ENCODE measurements at regions of chr16 and their contacts with region 1.

Region 1: GRCh38 chr16:30844671-30845449 is 49.0 kb downstream of the BCL7C start:
- DNase-seq: peak; percentile 31
- ATAC-seq: peak; percentile 93
- H3K4me3 Mint-ChIP-seq: peak overlapping the region; percentile 65
- H3K27ac Mint-ChIP-seq: peak overlapping the region; percentile 77
- H3K4me1 Mint-ChIP-seq: peaks cover 11% of the 10 kb centered on the region
- H3K27me3 Mint-ChIP-seq: no peaks in the 10 kb centered on the region
- CTCF ChIP-seq: peak; percentile 71

Region 2: GRCh38 chr16:30740364-30741251 is 104.3 kb before region 1 on chr16:
- CTCF ChIA-PET with region 1: no interaction called
- POLR2A ChIA-PET with region 1: no interaction called
- intact Hi-C with region 1: no loop called
- DNase-seq: no peak
- ATAC-seq: no peak
- H3K4me3 Mint-ChIP-seq: no peak overlapping the region
- H3K27ac Mint-ChIP-seq: peak overlapping the region; percentile 15
- H3K4me1 Mint-ChIP-seq: no peaks in the 10 kb centered on the region
- H3K27me3 Mint-ChIP-seq: no peaks in the 10 kb centered on the region
- CTCF ChIP-seq: no peak

Region 3: DNA sequence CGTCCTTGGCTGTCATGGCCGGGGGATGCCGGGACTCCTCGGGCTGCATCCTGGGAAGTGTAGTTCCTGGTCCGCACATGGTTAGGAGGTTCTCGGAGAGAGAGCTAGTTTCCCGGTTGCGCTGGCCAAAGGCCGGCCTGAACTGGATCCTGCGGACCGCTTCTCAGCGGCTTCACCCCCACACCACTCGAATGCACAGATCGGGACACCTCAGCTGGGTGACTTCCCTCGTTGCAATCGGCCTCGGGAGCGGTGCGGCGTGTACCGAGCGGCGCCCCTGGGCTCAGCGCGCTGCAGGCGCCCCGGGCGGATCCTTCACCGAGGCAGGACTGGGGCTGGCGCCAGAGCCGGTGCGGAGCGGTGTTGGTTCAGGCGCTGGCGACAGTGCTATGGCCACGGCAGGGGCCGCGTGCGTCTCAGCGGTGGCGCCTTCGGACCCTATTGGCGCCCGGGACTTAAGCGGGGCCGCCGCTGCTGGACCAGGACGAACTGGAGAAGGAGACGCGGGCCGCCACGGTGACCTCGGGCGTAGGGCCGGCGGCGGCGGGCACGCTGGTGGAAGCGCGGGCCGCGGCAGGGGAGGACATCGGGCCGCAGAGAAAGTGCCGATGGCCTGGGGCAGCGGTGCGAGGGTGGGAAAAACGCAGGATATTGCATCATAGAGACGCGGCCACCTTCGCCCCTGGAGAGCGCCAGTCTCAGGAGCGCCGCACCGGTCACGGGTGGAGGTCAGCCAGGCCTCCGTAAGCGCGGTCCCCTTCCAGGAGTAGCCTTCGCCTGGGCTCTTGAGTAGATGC is 69.3 kb before region 1 on chr16:
- CTCF ChIA-PET with region 1: no interaction called
- POLR2A ChIA-PET with region 1: no interaction called
- intact Hi-C with region 1: no loop called
- DNase-seq: peak; percentile 48
- ATAC-seq: peak; percentile 82
- H3K4me3 Mint-ChIP-seq: peak overlapping the region; percentile 89
- H3K27ac Mint-ChIP-seq: peak overlapping the region; percentile 61
- H3K4me1 Mint-ChIP-seq: peaks cover 21% of the 10 kb centered on the region
- H3K27me3 Mint-ChIP-seq: peaks cover 11% of the 10 kb centered on the region
- CTCF ChIP-seq: no peak

Region 4: GRCh38 chr16:30867747-30868146 is 22.9 kb after region 1 on chr16:
- CTCF ChIA-PET with region 1: interaction called, 18 read pairs
- POLR2A ChIA-PET with region 1: interaction called, 29 read pairs
- intact Hi-C with region 1: no loop called
- DNase-seq: no peak
- ATAC-seq: no peak
- H3K4me3 Mint-ChIP-seq: no peak overlapping the region
- H3K27ac Mint-ChIP-seq: no peak overlapping the region
- H3K4me1 Mint-ChIP-seq: peaks cover 11% of the 10 kb centered on the region
- H3K27me3 Mint-ChIP-seq: no peaks in the 10 kb centered on the region
- CTCF ChIP-seq: no peak

Region 5: GRCh38 chr16:30893744-30894539 is 49.1 kb after region 1 on chr16 and contains the start of gene BCL7C:
- CTCF ChIA-PET with region 1: interaction called, 11 read pairs
- POLR2A ChIA-PET with region 1: interaction called, 9 read pairs
- intact Hi-C with region 1: loop called (anchors 1 kb)
- DNase-seq: peak; percentile 86
- ATAC-seq: peak; percentile 76
- H3K4me3 Mint-ChIP-seq: peak within 1 kb of the TSS; percentile 84
- H3K27ac Mint-ChIP-seq: peak within 1 kb of the TSS; percentile 88
- H3K4me1 Mint-ChIP-seq: peaks cover 48% of the 10 kb centered on the region
- H3K27me3 Mint-ChIP-seq: no peaks in the 10 kb centered on the region
- CTCF ChIP-seq: no peak
- total RNA-seq, gene BCL7C: 32.2 and 35.7 TPM in 2 replicates

Region 6: DNA sequence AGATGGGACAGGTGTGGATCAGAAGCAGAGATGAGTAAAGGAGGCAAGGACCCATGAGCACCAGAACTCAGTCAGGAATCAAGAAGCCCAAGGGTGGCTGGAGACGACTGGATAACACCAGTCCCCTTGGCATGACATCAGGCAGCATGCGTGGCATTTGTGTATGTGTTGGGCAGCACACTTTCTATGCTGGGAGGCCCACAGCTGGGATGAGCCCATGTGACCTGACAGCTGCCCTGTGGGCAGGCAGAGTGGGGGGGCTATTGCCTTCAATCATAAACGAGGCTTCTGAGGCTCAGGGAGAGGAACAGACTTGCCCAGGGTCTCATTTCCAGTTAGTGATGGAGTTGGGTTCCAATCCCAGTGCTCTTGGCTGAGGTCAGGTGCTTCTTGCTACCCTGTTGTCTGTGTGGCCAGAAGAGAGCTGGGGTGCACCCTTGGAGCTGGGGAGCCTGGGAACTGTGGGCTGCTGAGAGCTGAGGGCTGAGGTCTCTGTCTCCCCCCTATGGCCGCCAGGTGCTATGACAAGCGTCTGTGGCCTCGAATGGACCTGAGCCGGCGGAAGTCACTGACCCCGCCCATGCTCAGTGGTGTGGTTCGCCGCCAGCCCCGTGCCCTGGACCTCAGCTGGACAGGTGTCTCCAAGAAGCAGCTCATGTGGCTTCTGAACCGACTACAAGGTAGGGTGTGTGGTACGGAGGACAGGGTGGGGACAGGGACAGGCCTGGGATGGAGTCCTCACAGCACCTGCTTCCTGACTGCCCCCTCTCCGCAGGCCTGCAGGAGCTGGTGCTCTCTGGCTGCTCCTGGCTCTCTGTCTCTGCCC is 97.0 kb after region 1 on chr16:
- CTCF ChIA-PET with region 1: interaction called, 40 read pairs
- POLR2A ChIA-PET with region 1: interaction called, 6 read pairs
- intact Hi-C with region 1: loop called (anchors 1 kb)
- DNase-seq: peak; percentile 62
- ATAC-seq: peak; percentile 99
- H3K4me3 Mint-ChIP-seq: peak overlapping the region; percentile 52
- H3K27ac Mint-ChIP-seq: peak overlapping the region; percentile 63
- H3K4me1 Mint-ChIP-seq: peaks cover 22% of the 10 kb centered on the region
- H3K27me3 Mint-ChIP-seq: no peaks in the 10 kb centered on the region
- CTCF ChIP-seq: peak; percentile 62

Region 7: GRCh38 chr16:31868691-31869167 is 1023.9 kb after region 1 on chr16:
- CTCF ChIA-PET with region 1: interaction called, 4 read pairs
- POLR2A ChIA-PET with region 1: no interaction called
- intact Hi-C with region 1: loop called (anchors 10 kb)
- DNase-seq: peak; percentile 60
- ATAC-seq: no peak
- H3K4me3 Mint-ChIP-seq: peak overlapping the region; percentile 41
- H3K27ac Mint-ChIP-seq: peak overlapping the region; percentile 66
- H3K4me1 Mint-ChIP-seq: peaks cover 46% of the 10 kb centered on the region
- H3K27me3 Mint-ChIP-seq: peaks cover 6% of the 10 kb centered on the region
- CTCF ChIP-seq: peak; percentile 35